ENCODE measurements at regions of chr4 and their contacts with region 1.

Region 1: GRCh38 chr4:163332500-163333406 is at the start of gene NPY1R:
- DNase-seq: peak; percentile 78 to 92 (median 86)
- H3K4me3 ChIP-seq: peak within 1 kb of the TSS; percentile 53 to 76 (median 56)
- H3K27ac ChIP-seq: peak within 1 kb of the TSS in 4 of 5 donors; percentile 33 to 83 (median 63)
- H3K4me1 ChIP-seq: peaks cover 0 to 6% of the 10 kb centered on the region in 2 donors
- H3K27me3 ChIP-seq: peaks cover 5% of the 10 kb centered on the region
- CTCF ChIP-seq: peak; percentile 19 to 76 (median 66)
- POLR2A ChIP-seq: no peak
- total RNA-seq, gene NPY1R: 6.9 to 105 (median 41.5) TPM

Region 2: GRCh38 chr4:162506253-162506652 is 826.5 kb before region 1 on chr4:
- intact Hi-C with region 1: loop called in 1 of 2 experiments (anchors 5 kb)
- DNase-seq: no peak
- H3K4me3 ChIP-seq: no peak overlapping the region
- H3K27ac ChIP-seq: no peak overlapping the region
- H3K4me1 ChIP-seq: no peaks in the 10 kb centered on the region
- H3K27me3 ChIP-seq: no peaks in the 10 kb centered on the region
- CTCF ChIP-seq: no peak
- POLR2A ChIP-seq: no peak